Right ventricle myocardium inferior (tissue), 1 donor: ENCODE measurements at regions of chr6 and their contacts with region 1.

Region 1: GRCh38 chr6:24720604-24721460 is 1.9 kb upstream of the C6orf62 start:
- DNase-seq: peak; percentile 100
- ATAC-seq: peak; percentile 96

Region 2: DNA sequence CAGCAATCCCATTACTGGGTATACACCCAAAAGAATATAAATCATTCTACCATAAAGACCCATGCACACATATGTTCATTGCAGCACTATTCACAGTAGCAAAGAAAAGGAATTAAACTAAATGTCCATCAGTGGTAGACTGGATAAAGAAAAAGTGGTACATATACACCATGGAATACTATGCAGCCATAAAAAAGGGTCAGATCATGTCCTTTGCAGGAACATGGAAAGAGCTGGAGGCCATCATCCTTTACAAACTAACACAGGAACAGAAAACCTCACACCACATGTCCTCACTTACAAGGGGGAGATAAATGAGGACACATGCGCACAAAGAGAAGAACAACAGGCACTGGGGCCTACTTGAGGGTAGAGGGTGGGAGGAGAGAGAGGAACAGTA is 423.9 kb before region 1 on chr6:
- intact Hi-C with region 1: no loop called
- DNase-seq: no peak
- ATAC-seq: no peak

Region 3: DNA sequence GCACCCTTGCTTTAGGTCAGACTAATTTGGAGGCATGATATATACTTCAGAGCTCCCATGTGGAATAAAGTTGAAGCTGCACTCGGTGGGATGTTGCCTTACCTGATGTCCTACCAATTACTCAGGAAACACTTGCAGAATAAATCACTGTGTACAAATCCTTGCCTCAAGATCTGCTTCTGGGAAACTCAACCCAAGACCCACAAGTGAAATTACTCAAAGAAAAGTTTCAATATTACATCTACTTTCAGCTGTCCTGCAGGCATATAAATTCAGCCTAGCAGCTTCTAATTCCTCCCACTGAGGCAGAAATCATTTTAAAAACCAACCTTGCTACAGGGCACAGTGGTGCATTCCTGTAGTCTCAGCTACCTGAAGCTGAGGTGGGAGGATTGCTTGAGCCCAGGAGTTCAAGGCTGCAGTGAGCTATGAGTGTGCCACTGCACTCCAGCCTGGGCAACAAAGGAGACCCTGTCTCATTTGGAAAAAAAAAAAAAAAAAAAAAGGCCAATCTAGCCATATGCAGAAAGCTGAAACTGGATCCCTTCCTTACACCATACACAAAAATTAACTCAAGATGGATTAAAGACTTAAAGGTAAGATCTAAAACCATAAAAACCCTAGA is 342.2 kb before region 1 on chr6:
- intact Hi-C with region 1: no loop called
- DNase-seq: no peak
- ATAC-seq: no peak

Region 4: GRCh38 chr6:24666641-24667377 is 54.0 kb before region 1 on chr6 and contains the starts of genes ACOT13 and TDP2:
- intact Hi-C with region 1: loop called (anchors 2 kb)
- DNase-seq: peak; percentile 99
- ATAC-seq: peak; percentile 100
- total RNA-seq, gene ACOT13: 75.8 TPM
- total RNA-seq, gene TDP2: 21.7 TPM

Region 5: DNA sequence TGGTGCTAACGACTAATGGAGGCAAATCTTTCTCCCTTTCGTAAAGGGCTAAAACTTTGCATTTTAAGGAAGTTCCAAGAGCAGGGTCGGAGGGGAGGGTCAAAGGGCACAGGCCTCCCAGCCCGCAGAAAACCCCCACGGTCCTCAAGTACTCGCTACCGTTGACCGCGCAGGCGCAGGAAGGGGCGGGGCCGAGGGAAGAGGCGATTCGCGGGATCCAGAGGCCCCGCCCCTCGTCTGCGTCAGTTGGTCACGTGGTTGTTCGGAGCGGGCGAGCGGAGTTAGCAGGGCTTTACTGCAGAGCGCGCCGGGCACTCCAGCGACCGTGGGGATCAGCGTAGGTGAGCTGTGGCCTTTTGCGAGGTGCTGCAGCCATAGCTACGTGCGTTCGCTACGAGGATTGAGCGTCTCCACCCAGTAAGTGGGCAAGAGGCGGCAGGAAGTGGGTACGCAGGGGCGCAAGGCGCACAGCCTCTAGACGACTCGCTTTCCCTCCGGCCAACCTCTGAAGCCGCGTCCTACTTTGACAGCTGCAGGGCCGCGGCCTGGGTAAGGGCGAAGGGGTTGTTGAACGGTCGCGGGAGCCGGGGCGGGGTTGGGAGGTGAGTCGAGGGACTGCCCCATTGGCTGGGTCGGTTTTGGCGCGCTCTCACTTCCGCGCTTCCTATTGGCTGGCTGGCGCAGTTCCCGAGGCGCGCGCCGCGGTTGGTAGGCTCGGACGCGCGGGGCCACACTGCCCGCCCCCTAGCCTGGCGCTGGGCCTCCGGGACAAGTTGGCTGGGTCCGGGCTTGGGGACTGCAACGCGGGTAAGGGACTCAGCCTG is 54.1 kb after region 1 on chr6 and contains the start of gene GMNN:
- intact Hi-C with region 1: loop called (anchors 2 kb)
- DNase-seq: peak; percentile 100
- ATAC-seq: peak; percentile 99
- total RNA-seq, gene GMNN: 8.1 TPM